ENCODE measurements at regions of chr17 and their contacts with region 1.

Region 1: GRCh38 chr17:81833160-81833920 is at the start of gene MCRIP1:
- DNase-seq: peak; percentile 96
- H3K4me3 Mint-ChIP-seq: peak within 1 kb of the TSS; percentile 88
- H3K27ac Mint-ChIP-seq: peak within 1 kb of the TSS; percentile 92
- H3K4me1 Mint-ChIP-seq: peaks cover 31% of the 10 kb centered on the region
- H3K27me3 Mint-ChIP-seq: no peaks in the 10 kb centered on the region
- total RNA-seq, gene MCRIP1: 37.1 to 38.2 TPM

Region 2: DNA sequence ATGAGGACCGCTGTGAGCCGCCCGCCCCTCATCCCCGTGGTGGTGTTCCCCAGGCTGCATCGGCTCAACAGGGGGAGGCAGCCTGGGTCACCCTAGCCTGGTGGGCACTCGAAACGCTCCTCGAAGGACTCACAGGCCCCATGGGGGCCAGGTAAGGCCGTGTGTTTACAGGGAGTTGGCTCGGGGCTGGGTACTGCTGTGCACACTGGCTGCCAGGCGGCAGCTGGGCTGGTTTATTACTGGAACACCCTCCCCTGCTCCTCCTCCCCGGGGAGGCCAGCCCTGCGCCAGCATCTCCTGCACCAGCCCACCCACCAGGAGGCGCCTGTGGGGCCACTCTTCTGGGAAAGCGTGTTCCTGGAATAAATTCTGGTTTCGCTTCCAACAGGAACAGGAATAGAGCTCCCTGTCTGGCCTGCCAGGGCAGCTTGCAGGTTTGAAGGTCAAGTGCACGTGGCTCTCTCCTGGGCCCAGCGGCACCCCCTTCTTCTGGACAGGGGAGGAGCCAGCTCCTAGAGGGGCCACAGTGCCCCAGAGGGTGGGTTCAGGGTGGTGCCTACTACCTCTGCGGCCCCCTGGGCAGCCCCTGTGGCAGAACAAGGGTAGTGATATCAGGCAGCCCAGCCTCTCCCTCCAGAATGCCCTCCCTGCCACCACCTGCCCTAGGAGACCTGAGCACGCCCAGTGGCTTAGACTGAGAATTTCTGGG is 11.6 kb before region 1 on chr17:
- CTCF ChIA-PET with region 1: no interaction called
- POLR2A ChIA-PET with region 1: interaction called, 13 read pairs
- DNase-seq: peak; percentile 60
- H3K4me3 Mint-ChIP-seq: no peak overlapping the region
- H3K27ac Mint-ChIP-seq: peak overlapping the region; percentile 44
- H3K4me1 Mint-ChIP-seq: peaks cover 13% of the 10 kb centered on the region
- H3K27me3 Mint-ChIP-seq: peaks cover 6% of the 10 kb centered on the region

Region 3: DNA sequence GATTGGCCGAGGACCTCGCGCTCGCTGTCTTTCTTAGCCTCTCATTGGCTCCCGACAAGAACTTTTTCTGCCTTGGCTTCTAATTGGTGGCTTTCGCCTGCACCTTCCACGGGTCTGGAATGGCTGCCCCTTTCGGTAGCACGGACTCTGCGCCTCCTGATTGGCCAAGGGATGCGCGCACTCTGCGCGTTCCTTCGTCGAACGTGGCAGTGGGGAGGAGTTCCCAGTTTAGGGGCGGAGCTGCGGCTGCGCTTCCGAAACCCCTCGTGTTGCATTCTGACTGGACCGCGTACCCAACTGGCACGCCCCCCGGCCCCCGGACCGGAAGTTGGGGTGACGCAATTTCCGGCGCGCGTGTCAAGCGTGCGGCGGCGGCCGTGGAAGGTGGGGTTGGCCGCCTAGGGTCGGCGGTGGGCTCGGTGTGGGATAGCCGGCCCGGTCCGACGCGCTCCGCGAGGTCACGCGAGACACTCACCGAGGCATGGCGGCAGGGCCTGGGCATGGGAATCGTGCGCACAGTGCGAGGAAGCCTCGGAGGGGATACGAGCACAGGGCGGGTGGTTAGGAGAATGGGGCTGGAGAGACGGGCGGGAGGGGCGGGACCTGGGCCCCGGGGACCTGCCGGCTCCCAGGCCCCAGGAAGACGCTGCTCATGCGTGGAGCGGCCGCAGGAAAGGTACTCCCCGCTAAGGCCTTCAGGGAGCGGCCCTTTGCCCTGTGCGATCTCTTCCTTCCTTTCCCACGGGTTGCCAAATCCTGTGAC is 27.6 kb after region 1 on chr17:
- CTCF ChIA-PET with region 1: interaction called, 5 read pairs
- POLR2A ChIA-PET with region 1: interaction called, 20 read pairs
- DNase-seq: peak; percentile 99
- H3K4me3 Mint-ChIP-seq: peak overlapping the region; percentile 97
- H3K27ac Mint-ChIP-seq: peak overlapping the region; percentile 97
- H3K4me1 Mint-ChIP-seq: peaks cover 50% of the 10 kb centered on the region
- H3K27me3 Mint-ChIP-seq: no peaks in the 10 kb centered on the region

Measured in activated CD4-positive, alpha-beta memory T cell treated with anti-CD3 and anti-CD28 coated beads, Interleukin-2, amount 10 ng/mL, durations not matched to agents 7 days and 5 days (primary cell).